Stomach (tissue), 19 donors: ENCODE measurements at regions of chr15 and their contacts with region 1.

Region 1: GRCh38 chr15:64678126-64678819 is 97.1 kb downstream of the RBPMS2 start:
- DNase-seq: no peak
- H3K4me3 ChIP-seq: no peak overlapping the region
- H3K27ac ChIP-seq: no peak overlapping the region
- H3K4me1 ChIP-seq: peaks cover 0 to 7% (median 0%) of the 10 kb centered on the region in 4 donors
- H3K27me3 ChIP-seq: no peaks in the 10 kb centered on the region
- CTCF ChIP-seq: no peak
- EP300 ChIP-seq: no peak
- POLR2A ChIP-seq: no peak

Region 2: DNA sequence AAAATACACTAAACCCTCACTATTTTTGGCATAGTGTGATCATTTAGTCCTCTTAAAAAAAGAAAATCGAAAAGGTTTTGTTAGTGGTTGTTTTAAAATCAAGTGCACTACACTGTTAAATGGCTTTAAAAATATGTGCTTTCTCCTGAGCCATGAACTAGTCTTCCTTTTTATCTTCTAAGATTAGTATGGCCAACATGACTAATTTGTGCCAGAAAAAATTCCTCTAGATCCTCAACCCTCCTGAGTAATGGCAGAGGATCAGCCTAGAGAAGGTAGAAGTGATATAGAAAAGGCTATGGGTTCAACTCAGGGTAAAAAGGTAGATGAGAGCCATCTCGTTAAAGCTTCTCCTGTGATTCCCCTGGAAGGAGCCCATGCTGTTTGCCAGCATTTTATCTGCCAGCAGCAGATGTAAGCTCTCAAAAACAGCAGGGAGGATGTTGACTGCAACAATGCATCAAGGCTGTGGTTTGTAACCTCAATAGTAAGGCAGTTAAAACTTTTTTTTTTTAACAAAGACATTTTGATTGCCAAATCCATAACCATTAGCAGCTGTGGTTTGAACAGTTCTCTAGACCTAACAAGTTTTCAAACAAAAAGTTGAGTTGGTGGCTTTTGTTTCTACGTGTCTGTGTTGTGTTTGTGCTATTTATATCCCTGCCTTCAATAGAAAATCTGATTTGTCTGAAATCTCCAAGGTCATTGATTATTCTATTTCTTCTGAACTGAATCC is 248.1 kb before region 1 on chr15:
- intact Hi-C with region 1: loop called (anchors 10 kb)
- DNase-seq: peak in 1 of 2 donors; percentile 82
- H3K4me3 ChIP-seq: no peak overlapping the region
- H3K27ac ChIP-seq: peak overlapping the region in 3 of 5 donors; percentile 40 to 53 (median 49)
- H3K4me1 ChIP-seq: peaks cover 0 to 17% (median 6%) of the 10 kb centered on the region in 4 donors
- H3K27me3 ChIP-seq: no peaks in the 10 kb centered on the region
- CTCF ChIP-seq: no peak
- EP300 ChIP-seq: no peak
- POLR2A ChIP-seq: no peak